PC-9 (cell line): ENCODE measurements at regions of chr9 and their contacts with region 1.

Region 1: GRCh38 chr9:108951578-108951977 is 17.4 kb downstream of the ABITRAM start:
- DNase-seq: no peak
- H3K4me3 ChIP-seq: no peak overlapping the region
- H3K27ac ChIP-seq: no peak overlapping the region
- H3K4me1 ChIP-seq: no peaks in the 10 kb centered on the region
- H3K27me3 ChIP-seq: no peaks in the 10 kb centered on the region
- CTCF ChIP-seq: no peak

Region 2: DNA sequence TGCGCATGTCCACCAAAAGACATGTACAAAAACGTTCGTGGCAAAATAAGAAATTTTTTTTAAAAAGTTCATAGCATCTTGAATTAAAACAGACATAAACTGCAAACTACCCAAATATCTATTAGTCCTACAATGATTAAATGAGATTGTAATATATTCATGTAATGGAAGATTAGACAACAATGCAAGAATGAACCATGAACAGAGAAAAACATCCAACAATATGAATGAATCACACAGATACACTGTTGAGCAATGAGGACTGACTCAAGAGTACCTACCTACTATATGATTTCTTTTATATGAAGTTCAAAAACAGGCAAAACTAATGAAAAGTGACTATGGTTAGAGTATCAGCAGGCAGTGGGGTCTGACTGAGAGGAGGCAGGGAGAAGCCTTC is 79.7 kb after region 1 on chr9:
- CTCF ChIA-PET with region 1: no interaction called
- POLR2A ChIA-PET with region 1: no interaction called
- intact Hi-C with region 1: no loop called
- DNase-seq: no peak
- H3K4me3 ChIP-seq: no peak overlapping the region
- H3K27ac ChIP-seq: no peak overlapping the region
- H3K4me1 ChIP-seq: peaks cover 34% of the 10 kb centered on the region
- H3K27me3 ChIP-seq: no peaks in the 10 kb centered on the region
- CTCF ChIP-seq: no peak

Region 3: GRCh38 chr9:109043578-109043977 is 92.0 kb after region 1 on chr9:
- CTCF ChIA-PET with region 1: interaction called, 11 read pairs
- POLR2A ChIA-PET with region 1: no interaction called
- intact Hi-C with region 1: no loop called
- DNase-seq: no peak
- H3K4me3 ChIP-seq: no peak overlapping the region
- H3K27ac ChIP-seq: no peak overlapping the region
- H3K4me1 ChIP-seq: peaks cover 24% of the 10 kb centered on the region
- H3K27me3 ChIP-seq: no peaks in the 10 kb centered on the region
- CTCF ChIP-seq: no peak